Activated CD4-positive, alpha-beta memory T cell treated with anti-CD3 and anti-CD28 coated beads for 36 hours (primary cell): ENCODE measurements at regions of chr9 and their contacts with region 1.

Region 1: GRCh38 chr9:70602321-70603019 is 188.0 kb upstream of the KLF9 start:
- DNase-seq: peak; percentile 55
- H3K4me3 Mint-ChIP-seq: no peak overlapping the region
- H3K27ac Mint-ChIP-seq: no peak overlapping the region
- H3K4me1 Mint-ChIP-seq: no peaks in the 10 kb centered on the region
- H3K27me3 Mint-ChIP-seq: no peaks in the 10 kb centered on the region

Region 2: DNA sequence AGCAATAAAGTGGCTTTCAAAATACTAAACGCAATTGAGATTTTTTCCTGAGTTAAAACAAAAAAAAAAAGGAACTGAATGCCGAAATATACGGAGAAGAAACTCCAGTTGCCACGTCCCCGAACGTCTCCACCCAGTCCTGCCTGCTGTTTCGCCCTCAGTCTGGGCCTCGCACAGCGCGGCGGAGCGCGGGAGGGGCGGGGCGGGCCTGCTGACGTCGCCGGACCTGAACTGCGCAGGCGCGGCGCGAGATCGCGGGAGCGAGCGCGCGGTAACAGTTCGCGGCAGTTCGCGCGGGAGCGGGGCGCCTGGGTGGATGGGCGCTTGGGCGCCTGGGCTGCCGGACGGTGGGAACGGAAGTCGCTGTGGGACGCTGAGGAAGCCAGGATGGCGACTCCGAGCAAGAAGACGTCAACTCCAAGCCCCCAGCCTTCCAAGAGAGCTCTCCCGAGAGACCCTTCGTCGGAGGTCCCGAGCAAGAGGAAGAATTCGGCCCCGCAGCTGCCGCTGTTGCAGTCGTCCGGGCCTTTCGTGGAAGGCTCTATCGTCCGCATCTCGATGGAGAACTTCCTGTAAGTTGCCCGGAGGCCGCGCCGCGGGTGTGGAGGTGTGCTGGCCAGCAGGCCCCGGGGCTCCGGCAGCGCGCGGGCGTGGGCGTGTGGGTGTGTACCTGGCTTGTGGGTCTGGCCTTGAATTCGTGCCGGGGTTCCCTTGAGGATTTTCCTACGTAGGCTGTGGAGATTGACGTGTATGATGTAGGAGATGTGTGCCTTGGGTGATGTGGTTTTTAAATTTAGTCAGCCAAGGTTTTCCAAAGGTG is 343.6 kb before region 1 on chr9 and contains the start of gene SMC5:
- CTCF ChIA-PET with region 1: interaction called, 5 read pairs
- POLR2A ChIA-PET with region 1: no interaction called
- intact Hi-C with region 1: loop called (anchors 2 kb)
- DNase-seq: peak; percentile 92
- H3K4me3 Mint-ChIP-seq: peak within 1 kb of the TSS; percentile 95
- H3K27ac Mint-ChIP-seq: peak within 1 kb of the TSS; percentile 88
- H3K4me1 Mint-ChIP-seq: peaks cover 47% of the 10 kb centered on the region
- H3K27me3 Mint-ChIP-seq: no peaks in the 10 kb centered on the region
- total RNA-seq, gene SMC5: 32.0 to 34.1 TPM

Region 3: DNA sequence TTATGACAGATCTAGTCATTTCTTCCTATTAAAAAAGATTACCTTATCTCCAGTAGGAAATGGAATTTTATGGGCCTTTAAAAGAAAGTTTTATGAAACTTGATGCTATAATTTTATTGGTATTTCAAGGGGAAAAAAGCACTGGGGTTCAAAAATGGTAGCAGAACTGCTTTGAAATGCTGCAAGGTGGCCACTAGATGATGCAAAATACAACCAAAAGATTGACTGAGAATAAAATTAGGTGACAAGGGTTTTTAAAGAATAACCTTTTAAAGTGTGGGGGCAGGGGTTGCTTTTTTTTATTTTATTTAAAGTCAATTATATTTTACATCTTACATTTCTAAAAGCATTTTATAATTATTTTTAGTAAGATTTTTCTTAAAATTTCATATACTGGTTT is 249.7 kb before region 1 on chr9:
- CTCF ChIA-PET with region 1: interaction called, 13 read pairs
- POLR2A ChIA-PET with region 1: no interaction called
- intact Hi-C with region 1: loop called (anchors 1 kb)
- DNase-seq: no peak
- H3K4me3 Mint-ChIP-seq: no peak overlapping the region
- H3K27ac Mint-ChIP-seq: no peak overlapping the region
- H3K4me1 Mint-ChIP-seq: no peaks in the 10 kb centered on the region
- H3K27me3 Mint-ChIP-seq: no peaks in the 10 kb centered on the region

Region 4: GRCh38 chr9:70413798-70414775 is 188.4 kb before region 1 on chr9 and contains the start of gene KLF9:
- CTCF ChIA-PET with region 1: interaction called, 13 read pairs
- POLR2A ChIA-PET with region 1: interaction called, 10 read pairs
- intact Hi-C with region 1: loop called (anchors 1 kb)
- DNase-seq: peak; percentile 96
- H3K4me3 Mint-ChIP-seq: peak within 1 kb of the TSS; percentile 97
- H3K27ac Mint-ChIP-seq: peak within 1 kb of the TSS; percentile 100
- H3K4me1 Mint-ChIP-seq: peaks cover 37% of the 10 kb centered on the region
- H3K27me3 Mint-ChIP-seq: peaks cover 2% of the 10 kb centered on the region
- total RNA-seq, gene KLF9: 23.7 to 24.5 TPM

Region 5: GRCh38 chr9:70519912-70520724 is 82.4 kb before region 1 on chr9:
- CTCF ChIA-PET with region 1: interaction called, 5 read pairs
- POLR2A ChIA-PET with region 1: no interaction called
- intact Hi-C with region 1: loop called (anchors 5 kb)
- DNase-seq: peak; percentile 31
- H3K4me3 Mint-ChIP-seq: peak overlapping the region; percentile 58
- H3K27ac Mint-ChIP-seq: peak overlapping the region; percentile 88
- H3K4me1 Mint-ChIP-seq: peaks cover 30% of the 10 kb centered on the region
- H3K27me3 Mint-ChIP-seq: peaks cover 1% of the 10 kb centered on the region

Region 6: GRCh38 chr9:70614786-70615463 is 12.5 kb after region 1 on chr9:
- CTCF ChIA-PET with region 1: interaction called, 11 read pairs
- POLR2A ChIA-PET with region 1: no interaction called
- intact Hi-C with region 1: no loop called
- DNase-seq: no peak
- H3K4me3 Mint-ChIP-seq: no peak overlapping the region
- H3K27ac Mint-ChIP-seq: no peak overlapping the region
- H3K4me1 Mint-ChIP-seq: no peaks in the 10 kb centered on the region
- H3K27me3 Mint-ChIP-seq: no peaks in the 10 kb centered on the region